Pancreas (tissue), 10 donors: ENCODE measurements at regions of chr15 and their contacts with region 1.

Region 1: GRCh38 chr15:39213385-39213840 is 367.5 kb upstream of the THBS1 start:
- DNase-seq: peak in 2 of 6 donors; percentile 19 to 25
- ATAC-seq: peak in 3 of 4 donors; percentile 18 to 41 (median 26)
- H3K4me3 ChIP-seq: no peak overlapping the region
- H3K27ac ChIP-seq: peak overlapping the region in 1 of 4 donors; percentile 19
- H3K4me1 ChIP-seq: peaks cover 0 to 20% (median 4%) of the 10 kb centered on the region in 3 donors
- H3K27me3 ChIP-seq: no peaks in the 10 kb centered on the region
- CTCF ChIP-seq: no peak

Region 2: DNA sequence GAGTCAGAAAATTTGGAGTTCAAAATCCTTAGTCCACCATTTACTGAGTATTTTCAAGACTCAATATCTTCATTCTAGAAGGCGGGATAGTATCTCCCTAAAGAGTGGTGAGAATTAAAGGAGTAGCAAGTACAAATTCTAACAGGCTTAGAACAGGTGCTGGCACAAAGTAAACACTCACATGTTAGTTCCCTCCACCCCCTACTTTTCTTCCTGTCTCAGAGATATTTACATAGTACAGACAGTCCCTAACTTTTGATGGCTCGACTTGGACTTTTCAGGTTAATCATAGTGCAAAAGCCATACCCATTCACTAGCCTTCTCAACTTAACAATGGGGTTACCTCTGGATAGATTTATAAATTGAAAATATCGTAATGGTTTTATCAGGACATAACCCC is 172.6 kb before region 1 on chr15:
- intact Hi-C with region 1: no loop called
- DNase-seq: no peak
- ATAC-seq: peak; percentile 60 to 86 (median 85)
- H3K4me3 ChIP-seq: no peak overlapping the region
- H3K27ac ChIP-seq: no peak overlapping the region
- H3K4me1 ChIP-seq: peaks cover 0 to 14% (median 11%) of the 10 kb centered on the region in 3 donors
- H3K27me3 ChIP-seq: no peaks in the 10 kb centered on the region
- CTCF ChIP-seq: no peak

Region 3: GRCh38 chr15:39154227-39154638 is 59.2 kb before region 1 on chr15:
- intact Hi-C with region 1: no loop called
- DNase-seq: no peak
- ATAC-seq: peak; percentile 53 to 77 (median 62)
- H3K4me3 ChIP-seq: no peak overlapping the region
- H3K27ac ChIP-seq: no peak overlapping the region
- H3K4me1 ChIP-seq: no peaks in the 10 kb centered on the region
- H3K27me3 ChIP-seq: no peaks in the 10 kb centered on the region
- CTCF ChIP-seq: peak in 2 of 4 donors; percentile 13 to 27

Region 4: DNA sequence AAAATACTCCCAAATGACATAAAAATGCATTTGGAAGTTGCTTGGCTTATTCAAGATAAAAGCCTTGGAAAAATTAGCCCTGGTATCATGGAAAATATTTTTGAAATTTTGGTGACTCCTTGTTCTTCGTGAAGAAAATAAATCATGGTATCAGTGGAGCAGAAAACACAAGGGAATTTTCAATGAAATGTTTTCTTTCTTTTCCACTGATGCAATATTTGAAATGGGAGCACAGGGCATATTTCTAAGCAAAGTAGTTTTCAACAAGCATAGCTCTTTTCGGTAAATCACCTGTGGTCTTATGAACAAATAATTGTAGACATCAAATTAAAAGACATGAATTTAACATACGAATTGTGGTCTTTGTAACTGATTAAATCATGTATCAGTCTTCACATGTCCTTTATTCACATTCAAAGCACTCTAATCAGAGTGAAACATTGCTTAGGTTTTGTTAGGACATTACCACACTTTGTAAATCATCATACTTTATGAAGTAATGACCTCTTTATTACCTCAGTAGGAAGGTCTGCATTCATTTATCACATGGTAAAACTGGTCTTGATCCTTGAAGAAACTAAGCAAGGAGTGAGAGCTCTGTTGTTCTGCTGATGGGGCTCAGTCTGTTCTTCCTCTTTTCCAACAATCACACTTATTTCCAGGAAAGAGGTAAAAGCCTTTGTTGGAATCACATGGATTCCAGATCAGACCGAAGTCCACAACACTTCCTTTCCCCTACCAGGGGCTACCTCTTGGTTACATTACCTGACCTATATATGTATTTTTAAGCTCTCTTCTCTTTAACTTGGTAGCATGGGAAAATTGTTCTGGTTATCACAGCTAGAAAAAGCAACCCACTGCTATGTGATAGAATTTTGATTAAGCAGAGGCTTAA is 46.0 kb before region 1 on chr15:
- intact Hi-C with region 1: no loop called
- DNase-seq: no peak
- ATAC-seq: no peak
- H3K4me3 ChIP-seq: no peak overlapping the region
- H3K27ac ChIP-seq: no peak overlapping the region
- H3K4me1 ChIP-seq: peaks cover 0 to 2% (median 0%) of the 10 kb centered on the region in 3 donors
- H3K27me3 ChIP-seq: no peaks in the 10 kb centered on the region
- CTCF ChIP-seq: no peak

Region 5: GRCh38 chr15:39273717-39274411 is 60.5 kb after region 1 on chr15:
- intact Hi-C with region 1: loop called in 1 of 3 experiments (anchors 10 kb)
- DNase-seq: peak in 4 of 6 donors; percentile 62 to 95 (median 94)
- ATAC-seq: peak; percentile 80 to 87 (median 84)
- H3K4me3 ChIP-seq: peak overlapping the region in 2 of 4 donors; percentile 33 to 38
- H3K27ac ChIP-seq: peak overlapping the region; percentile 60 to 87 (median 83)
- H3K4me1 ChIP-seq: peaks cover 20 to 49% (median 31%) of the 10 kb centered on the region in 3 donors
- H3K27me3 ChIP-seq: no peaks in the 10 kb centered on the region
- CTCF ChIP-seq: no peak